ENCODE measurements at regions of chr3 and their contacts with region 1.

Region 1: DNA sequence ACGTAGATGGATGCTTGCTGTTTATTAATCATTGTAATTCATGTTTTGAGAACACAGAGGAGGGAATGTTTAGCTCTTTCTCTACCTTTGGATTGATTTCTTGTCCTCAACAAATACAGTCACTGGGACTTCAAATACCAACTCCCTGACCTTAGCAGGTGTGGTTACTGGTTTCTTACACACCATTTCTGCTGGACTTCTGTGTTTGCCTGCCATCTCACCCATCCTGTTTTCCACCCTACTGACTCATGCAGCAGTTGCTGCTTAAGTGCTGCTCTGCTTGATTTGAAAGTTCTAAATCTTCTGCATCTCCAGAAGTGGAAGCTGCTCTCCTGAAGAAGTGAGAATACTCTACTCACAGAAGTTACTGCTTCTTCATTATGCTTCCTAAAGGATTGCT is 170.3 kb downstream of the ZPLD1 start:
- DNase-seq: no peak
- ATAC-seq: no peak

Region 2: GRCh38 chr3:102544741-102545140 is 60.4 kb before region 1 on chr3:
- intact Hi-C with region 1: loop called (anchors 2 kb)
- DNase-seq: no peak
- ATAC-seq: no peak

Measured in sciatic nerve (tissue), 2 donors.